Sciatic nerve (tissue), 2 donors: ENCODE measurements at regions of chr5 and their contacts with region 1.

Region 1: DNA sequence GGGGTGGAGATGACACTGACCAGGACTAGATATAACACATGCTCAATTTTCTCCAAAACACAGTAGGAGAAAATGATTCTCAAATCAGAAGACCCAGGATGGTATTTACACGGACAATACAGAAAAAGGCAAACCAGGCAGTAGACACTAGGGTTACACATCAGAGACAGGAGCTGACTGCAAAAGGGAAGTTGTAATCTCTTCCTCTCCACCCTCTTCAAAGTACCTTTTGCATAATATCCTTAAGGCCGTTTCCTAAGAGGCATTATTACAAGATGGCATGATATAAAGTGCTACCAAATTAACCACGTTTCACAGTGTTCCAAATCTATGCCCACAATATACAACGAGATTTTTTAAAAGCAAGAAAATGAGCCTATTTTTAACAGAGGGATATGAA is 39.2 kb downstream of the YIPF5 start:
- DNase-seq: no peak
- ATAC-seq: no peak

Region 2: GRCh38 chr5:142461028-142461590 is 1670.2 kb before region 1 on chr5:
- intact Hi-C with region 1: loop called (anchors 5 kb)
- DNase-seq: no peak
- ATAC-seq: no peak